SK-N-SH (cell line): ENCODE measurements at regions of chr5 and their contacts with region 1.

Region 1: GRCh38 chr5:135466178-135467050 is 14.3 kb upstream of the TIFAB start:
- DNase-seq: peak; percentile 94
- H3K4me3 ChIP-seq: peak overlapping the region in 1 of 2 experiments; percentile 50; a peak in 1 of 4 replicates
- H3K27ac ChIP-seq: no peak overlapping the region
- H3K4me1 ChIP-seq: peaks cover 0 to 3% of the 10 kb centered on the region in 2 experiments; a peak in 1 of 4 replicates
- H3K27me3 ChIP-seq: peaks cover 51% of the 10 kb centered on the region
- CTCF ChIP-seq: peak; percentile 89
- EP300 ChIP-seq: no peak
- RAD21 ChIP-seq: peak; percentile 90

Region 2: DNA sequence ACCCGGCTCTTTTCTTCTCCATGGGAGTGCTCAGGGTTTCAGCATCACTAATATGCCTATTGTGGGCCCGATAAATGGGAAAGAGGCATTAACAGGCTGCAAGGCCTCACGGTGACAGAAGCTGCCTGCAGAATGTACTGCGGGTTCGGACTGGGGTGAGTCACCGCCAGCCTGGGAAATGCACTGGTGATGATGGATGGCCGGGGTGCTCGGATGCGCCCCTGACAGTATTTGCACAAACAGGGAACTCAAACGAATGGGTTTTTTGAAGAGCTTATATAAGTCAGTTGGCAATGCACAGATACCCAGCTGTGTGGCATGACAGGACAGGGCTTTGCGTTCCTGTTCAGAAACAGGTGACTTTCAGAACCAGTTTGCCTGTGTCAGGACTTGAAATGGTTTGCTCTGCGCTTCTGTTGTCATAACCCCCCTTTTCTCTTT is 390.3 kb before region 1 on chr5:
- CTCF ChIA-PET with region 1: no interaction called
- POLR2A ChIA-PET with region 1: no interaction called
- DNase-seq: no peak
- H3K4me3 ChIP-seq: no peak overlapping the region
- H3K27ac ChIP-seq: no peak overlapping the region
- H3K4me1 ChIP-seq: no peaks in the 10 kb centered on the region; a peak in 1 of 4 replicates
- H3K27me3 ChIP-seq: no peaks in the 10 kb centered on the region; the same call in 1 of the 2 replicates
- CTCF ChIP-seq: no peak
- EP300 ChIP-seq: no peak
- RAD21 ChIP-seq: no peak

Region 3: DNA sequence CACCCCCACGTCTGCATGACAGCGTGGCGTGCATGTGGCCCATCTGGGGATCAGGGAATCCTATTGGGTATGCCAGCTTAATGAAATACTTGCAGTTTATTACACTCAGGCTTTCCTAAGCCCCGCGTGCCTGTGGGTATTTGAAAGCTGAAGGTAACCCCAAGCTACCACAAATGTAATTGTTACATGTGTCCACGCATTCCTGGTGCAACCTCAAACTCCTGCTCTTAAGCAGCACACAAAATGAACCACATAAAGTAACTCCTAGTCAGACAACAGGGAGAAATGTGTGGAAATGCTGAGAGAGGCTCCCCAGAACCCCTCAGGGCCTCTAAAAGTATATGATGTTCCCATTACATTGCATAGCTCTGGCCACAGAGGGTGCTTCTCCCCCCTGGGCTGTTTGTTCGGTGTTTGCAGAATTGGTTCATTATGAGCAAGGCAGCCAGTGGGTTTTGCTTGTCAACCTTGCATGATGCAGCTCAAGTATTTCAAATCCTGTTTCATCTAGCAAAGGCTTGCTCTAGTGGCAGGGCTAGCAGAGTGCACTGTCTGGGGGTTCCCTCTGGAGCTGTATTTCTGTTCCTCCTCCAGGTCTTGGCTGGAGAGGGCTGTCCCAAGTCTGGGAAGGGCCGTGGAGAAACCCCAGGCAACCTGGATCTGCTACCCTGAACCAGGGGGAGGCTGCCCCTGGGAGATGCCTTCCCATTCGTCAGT is 17.5 kb before region 1 on chr5:
- CTCF ChIA-PET with region 1: interaction called, 83 read pairs
- POLR2A ChIA-PET with region 1: no interaction called
- DNase-seq: no peak
- H3K4me3 ChIP-seq: no peak overlapping the region
- H3K27ac ChIP-seq: no peak overlapping the region
- H3K4me1 ChIP-seq: no peaks in the 10 kb centered on the region
- H3K27me3 ChIP-seq: peaks cover 27% of the 10 kb centered on the region
- CTCF ChIP-seq: no peak
- EP300 ChIP-seq: no peak
- RAD21 ChIP-seq: no peak

Region 4: GRCh38 chr5:135488727-135489465 is 22.5 kb after region 1 on chr5:
- CTCF ChIA-PET with region 1: interaction called, 33 read pairs
- POLR2A ChIA-PET with region 1: no interaction called
- DNase-seq: peak; percentile 61
- H3K4me3 ChIP-seq: peak overlapping the region; percentile 21 to 44; a peak in 3 of 4 replicates
- H3K27ac ChIP-seq: no peak overlapping the region
- H3K4me1 ChIP-seq: peaks cover 3 to 5% of the 10 kb centered on the region in 2 experiments; a peak in 3 of 4 replicates
- H3K27me3 ChIP-seq: no peaks in the 10 kb centered on the region; the same call in 1 of the 2 replicates
- CTCF ChIP-seq: no peak
- EP300 ChIP-seq: no peak
- RAD21 ChIP-seq: no peak

Region 5: GRCh38 chr5:135534609-135535419 is 68.4 kb after region 1 on chr5:
- CTCF ChIA-PET with region 1: interaction called, 38 read pairs
- POLR2A ChIA-PET with region 1: no interaction called
- DNase-seq: peak; percentile 52
- H3K4me3 ChIP-seq: no peak overlapping the region
- H3K27ac ChIP-seq: no peak overlapping the region
- H3K4me1 ChIP-seq: no peaks in the 10 kb centered on the region
- H3K27me3 ChIP-seq: peaks cover 89% of the 10 kb centered on the region
- CTCF ChIP-seq: no peak
- EP300 ChIP-seq: no peak
- RAD21 ChIP-seq: no peak

Region 6: GRCh38 chr5:135560858-135561257 is 94.4 kb after region 1 on chr5:
- CTCF ChIA-PET with region 1: interaction called, 791 read pairs
- POLR2A ChIA-PET with region 1: no interaction called
- DNase-seq: peak; percentile 81
- H3K4me3 ChIP-seq: peak overlapping the region in 1 of 2 experiments; percentile 22; a peak in 1 of 4 replicates
- H3K27ac ChIP-seq: no peak overlapping the region
- H3K4me1 ChIP-seq: no peaks in the 10 kb centered on the region; a peak in 1 of 4 replicates
- H3K27me3 ChIP-seq: peaks cover 21% of the 10 kb centered on the region
- CTCF ChIP-seq: peak; percentile 84
- EP300 ChIP-seq: no peak
- RAD21 ChIP-seq: peak; percentile 85